ENCODE measurements at regions of chr12 and their contacts with region 1.

Region 1: GRCh38 chr12:111396726-111397445 is 8.8 kb upstream of the SH2B3 start:
- DNase-seq: peak; percentile 92
- ATAC-seq: peak; percentile 74
- H3K4me3 Mint-ChIP-seq: peak overlapping the region; percentile 83
- H3K27ac Mint-ChIP-seq: peak overlapping the region; percentile 80
- H3K4me1 Mint-ChIP-seq: peaks cover 37% of the 10 kb centered on the region
- H3K27me3 Mint-ChIP-seq: no peaks in the 10 kb centered on the region
- CTCF ChIP-seq: peak; percentile 89

Region 2: GRCh38 chr12:111368788-111369495 is 27.9 kb before region 1 on chr12 and contains the start of gene PHETA1:
- CTCF ChIA-PET with region 1: interaction called, 12 read pairs
- POLR2A ChIA-PET with region 1: interaction called, 4 read pairs
- intact Hi-C with region 1: no loop called
- DNase-seq: peak; percentile 80
- ATAC-seq: peak; percentile 96
- H3K4me3 Mint-ChIP-seq: peak within 1 kb of the TSS; percentile 85
- H3K27ac Mint-ChIP-seq: no peak within 1 kb of the TSS
- H3K4me1 Mint-ChIP-seq: peaks cover 35% of the 10 kb centered on the region
- H3K27me3 Mint-ChIP-seq: no peaks in the 10 kb centered on the region
- CTCF ChIP-seq: no peak
- total RNA-seq, gene PHETA1: 1.6 and 2.0 TPM in 2 replicates

Region 3: DNA sequence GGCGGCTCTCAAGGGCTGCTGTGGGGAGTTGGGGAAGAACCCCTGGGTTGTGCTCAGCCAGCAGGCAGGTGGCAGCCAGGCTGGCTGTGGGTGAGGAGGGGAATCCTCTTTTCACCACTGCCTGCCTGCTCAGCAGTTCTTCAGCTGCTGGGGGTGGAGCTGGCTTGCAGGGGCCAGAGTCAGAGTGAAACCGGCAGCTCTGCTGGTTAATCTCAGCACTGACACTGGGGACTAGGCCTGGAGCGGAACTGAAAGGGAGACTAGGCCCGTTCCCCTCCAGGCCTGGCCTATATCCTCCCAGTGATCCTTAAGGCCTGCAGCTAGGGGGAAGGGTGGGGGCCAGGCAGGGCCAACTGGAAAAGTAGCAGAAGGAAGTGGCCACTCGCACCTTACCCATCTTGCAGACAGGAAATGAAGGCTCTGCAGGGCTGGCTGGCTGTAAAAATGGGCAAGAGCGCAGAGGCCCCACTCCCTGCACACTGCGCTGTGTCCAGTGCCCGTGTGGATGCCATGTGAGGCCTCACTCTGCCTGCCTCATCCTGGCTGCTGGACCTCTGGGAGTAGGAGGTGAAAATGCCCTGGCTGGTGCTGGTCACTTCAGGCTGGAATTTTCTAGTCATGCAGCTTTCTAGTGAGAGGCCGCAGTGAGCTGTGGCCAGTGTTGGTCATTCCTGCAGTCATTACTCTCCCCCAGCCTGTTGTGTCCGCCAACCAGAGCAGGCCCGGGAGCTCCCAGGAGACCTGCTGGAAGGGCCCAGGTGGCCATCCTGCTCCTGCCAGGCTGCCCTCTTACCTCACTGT is 48.2 kb after region 1 on chr12:
- CTCF ChIA-PET with region 1: interaction called, 522 read pairs
- POLR2A ChIA-PET with region 1: interaction called, 122 read pairs
- intact Hi-C with region 1: loop called (anchors 1 kb)
- DNase-seq: peak; percentile 75
- ATAC-seq: peak; percentile 93
- H3K4me3 Mint-ChIP-seq: peak overlapping the region; percentile 48
- H3K27ac Mint-ChIP-seq: peak overlapping the region; percentile 78
- H3K4me1 Mint-ChIP-seq: peaks cover 85% of the 10 kb centered on the region
- H3K27me3 Mint-ChIP-seq: no peaks in the 10 kb centered on the region
- CTCF ChIP-seq: no peak

Region 4: GRCh38 chr12:111482462-111482861 is 85.6 kb after region 1 on chr12:
- CTCF ChIA-PET with region 1: interaction called, 33 read pairs
- POLR2A ChIA-PET with region 1: no interaction called
- intact Hi-C with region 1: loop called (anchors 1 kb)
- DNase-seq: no peak
- ATAC-seq: no peak
- H3K4me3 Mint-ChIP-seq: no peak overlapping the region
- H3K27ac Mint-ChIP-seq: no peak overlapping the region
- H3K4me1 Mint-ChIP-seq: no peaks in the 10 kb centered on the region
- H3K27me3 Mint-ChIP-seq: no peaks in the 10 kb centered on the region
- CTCF ChIP-seq: no peak

Region 5: DNA sequence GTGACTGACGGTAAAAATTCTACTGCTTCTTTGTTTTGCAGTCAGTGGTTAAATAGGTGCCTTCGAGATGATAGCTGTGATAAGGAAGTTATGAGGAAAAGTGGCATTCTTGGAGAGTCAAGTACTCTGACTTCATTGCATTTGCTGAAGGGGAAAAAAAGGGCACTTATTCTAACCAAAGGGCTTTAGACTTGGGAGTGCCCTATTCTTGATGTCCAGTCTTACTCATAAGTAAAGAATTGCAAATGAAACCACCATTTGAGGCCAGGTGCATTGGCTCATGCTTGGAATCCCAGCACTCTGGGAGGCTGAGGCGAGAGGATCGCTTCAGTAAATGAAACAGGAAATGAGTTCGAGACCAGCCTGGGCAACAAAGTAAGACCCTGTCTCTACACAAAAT is 248.5 kb after region 1 on chr12:
- CTCF ChIA-PET with region 1: no interaction called
- POLR2A ChIA-PET with region 1: no interaction called
- intact Hi-C with region 1: no loop called
- DNase-seq: no peak
- ATAC-seq: no peak
- H3K4me3 Mint-ChIP-seq: no peak overlapping the region
- H3K27ac Mint-ChIP-seq: no peak overlapping the region
- H3K4me1 Mint-ChIP-seq: no peaks in the 10 kb centered on the region
- H3K27me3 Mint-ChIP-seq: no peaks in the 10 kb centered on the region
- CTCF ChIP-seq: no peak

Region 6: DNA sequence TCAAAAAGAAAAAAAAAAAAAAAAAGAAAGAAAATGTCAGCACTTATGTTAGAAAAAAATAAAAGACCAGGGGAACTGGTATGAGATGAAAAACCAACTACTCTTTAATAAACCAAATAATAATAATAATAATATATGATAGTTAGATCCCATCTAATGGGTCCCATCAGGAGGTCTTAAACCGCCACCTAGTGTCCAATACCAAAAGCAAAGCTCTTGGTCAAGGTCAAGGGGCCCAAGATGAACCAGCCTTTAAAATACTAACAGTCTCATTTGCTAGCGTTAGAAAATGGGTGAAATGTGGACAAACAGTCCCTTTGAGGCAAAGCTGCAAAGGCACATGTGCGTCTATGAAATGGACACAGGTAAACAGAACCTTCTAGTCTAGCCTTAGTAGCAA is 276.6 kb after region 1 on chr12:
- CTCF ChIA-PET with region 1: interaction called, 5 read pairs
- POLR2A ChIA-PET with region 1: no interaction called
- intact Hi-C with region 1: loop called (anchors 1 kb)
- DNase-seq: no peak
- ATAC-seq: no peak
- H3K4me3 Mint-ChIP-seq: no peak overlapping the region
- H3K27ac Mint-ChIP-seq: no peak overlapping the region
- H3K4me1 Mint-ChIP-seq: no peaks in the 10 kb centered on the region
- H3K27me3 Mint-ChIP-seq: no peaks in the 10 kb centered on the region
- CTCF ChIP-seq: no peak

Measured in activated B cell treated with CpG ODN at 0.5 μM for 24 hours (primary cell).